ENCODE measurements at regions of chr1 and their contacts with region 1.

Region 1: GRCh38 chr1:178031856-178032320 is 62.0 kb upstream of the RASAL2 start:
- DNase-seq: peak; percentile 73 to 95
- ATAC-seq: peak; percentile 42 to 96 (median 88)
- H3K4me3 ChIP-seq: no peak overlapping the region
- H3K27ac ChIP-seq: peak overlapping the region in 2 of 10 donors; percentile 14 to 16
- H3K4me1 ChIP-seq: peaks cover 2 to 41% (median 33%) of the 10 kb centered on the region in 9 donors
- H3K27me3 ChIP-seq: no peaks in the 10 kb centered on the region
- CTCF ChIP-seq: peak; percentile 81 to 93 (median 89)

Region 2: DNA sequence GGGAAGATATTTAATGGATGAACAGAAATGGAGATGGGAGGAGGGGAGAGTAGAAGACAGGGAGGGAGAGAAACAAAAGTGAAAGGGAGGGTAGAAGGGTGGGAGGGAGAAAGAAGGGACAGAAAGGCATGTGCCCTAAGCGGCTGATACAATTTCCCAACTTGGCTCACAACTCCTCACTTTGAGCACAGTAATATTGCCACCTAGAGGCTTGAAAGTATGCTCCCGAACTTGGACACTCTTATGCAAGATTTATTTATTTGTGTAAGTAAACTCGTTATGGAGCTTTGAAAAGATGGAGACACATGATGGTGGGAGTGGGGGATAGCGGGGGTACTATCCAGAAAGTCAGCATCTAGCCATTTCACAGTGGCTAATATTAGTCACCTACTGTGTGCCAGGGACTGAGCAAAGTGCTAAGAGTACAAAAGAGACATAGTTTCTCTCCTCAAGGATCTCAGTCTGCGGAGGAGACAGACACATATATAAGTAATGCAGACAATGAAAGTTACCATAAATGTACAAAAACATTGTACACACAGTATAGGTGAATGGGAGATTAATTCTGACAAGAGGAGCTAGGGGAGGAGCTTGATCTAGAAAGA is 251.7 kb before region 1 on chr1:
- intact Hi-C with region 1: no loop called
- DNase-seq: no peak
- ATAC-seq: peak in 5 of 8 donors; percentile 44 to 67 (median 65)
- H3K4me3 ChIP-seq: no peak overlapping the region
- H3K27ac ChIP-seq: no peak overlapping the region
- H3K4me1 ChIP-seq: no peaks in the 10 kb centered on the region
- H3K27me3 ChIP-seq: peaks cover 0 to 52% (median 15%) of the 10 kb centered on the region in 7 donors
- CTCF ChIP-seq: peak in 8 of 9 donors; percentile 39 to 64 (median 49)

Region 3: GRCh38 chr1:177873238-177873637 is 158.7 kb before region 1 on chr1:
- intact Hi-C with region 1: no loop called
- DNase-seq: no peak
- ATAC-seq: no peak
- H3K4me3 ChIP-seq: no peak overlapping the region
- H3K27ac ChIP-seq: no peak overlapping the region
- H3K4me1 ChIP-seq: no peaks in the 10 kb centered on the region
- H3K27me3 ChIP-seq: peaks cover 0 to 25% (median 9%) of the 10 kb centered on the region in 7 donors
- CTCF ChIP-seq: no peak

Region 4: DNA sequence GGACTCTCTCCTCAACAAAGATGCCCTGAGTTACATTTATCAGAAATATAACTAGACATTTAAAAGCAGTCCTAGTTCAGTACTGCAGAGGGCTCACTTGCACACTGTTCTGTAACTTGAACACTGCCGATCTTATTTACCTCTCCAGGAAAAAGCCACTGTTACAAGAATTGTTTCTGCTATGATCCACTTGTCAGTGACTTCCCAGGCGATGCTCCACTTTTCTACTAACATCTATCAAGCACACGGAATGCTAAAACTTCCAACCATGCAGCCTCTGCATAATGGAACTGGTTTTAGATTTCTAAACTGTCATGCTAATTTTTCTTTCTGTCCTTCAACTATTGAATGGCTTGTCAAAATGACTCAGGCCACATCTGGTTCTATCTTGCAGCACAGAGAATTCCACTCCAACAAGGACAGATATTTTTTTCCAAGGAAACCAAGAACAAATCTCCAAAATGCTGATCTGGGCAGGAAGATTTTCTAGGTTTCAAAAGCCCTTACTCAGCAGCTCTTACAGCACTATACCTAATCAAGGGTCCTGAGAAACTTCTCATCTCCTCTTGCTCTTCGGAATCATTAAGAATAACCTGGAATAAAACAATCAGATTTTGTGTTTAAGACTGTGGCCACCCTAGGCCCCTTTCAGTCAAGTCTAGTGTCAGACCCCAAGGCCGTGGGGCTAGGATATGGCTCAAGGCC is 71.9 kb before region 1 on chr1:
- intact Hi-C with region 1: loop called in 1 of 10 experiments (anchors 10 kb)
- DNase-seq: no peak
- ATAC-seq: peak in 4 of 8 donors; percentile 37 to 77 (median 54)
- H3K4me3 ChIP-seq: no peak overlapping the region
- H3K27ac ChIP-seq: no peak overlapping the region
- H3K4me1 ChIP-seq: no peaks in the 10 kb centered on the region
- H3K27me3 ChIP-seq: no peaks in the 10 kb centered on the region
- CTCF ChIP-seq: peak in 8 of 9 donors; percentile 29 to 54 (median 36)

Region 5: DNA sequence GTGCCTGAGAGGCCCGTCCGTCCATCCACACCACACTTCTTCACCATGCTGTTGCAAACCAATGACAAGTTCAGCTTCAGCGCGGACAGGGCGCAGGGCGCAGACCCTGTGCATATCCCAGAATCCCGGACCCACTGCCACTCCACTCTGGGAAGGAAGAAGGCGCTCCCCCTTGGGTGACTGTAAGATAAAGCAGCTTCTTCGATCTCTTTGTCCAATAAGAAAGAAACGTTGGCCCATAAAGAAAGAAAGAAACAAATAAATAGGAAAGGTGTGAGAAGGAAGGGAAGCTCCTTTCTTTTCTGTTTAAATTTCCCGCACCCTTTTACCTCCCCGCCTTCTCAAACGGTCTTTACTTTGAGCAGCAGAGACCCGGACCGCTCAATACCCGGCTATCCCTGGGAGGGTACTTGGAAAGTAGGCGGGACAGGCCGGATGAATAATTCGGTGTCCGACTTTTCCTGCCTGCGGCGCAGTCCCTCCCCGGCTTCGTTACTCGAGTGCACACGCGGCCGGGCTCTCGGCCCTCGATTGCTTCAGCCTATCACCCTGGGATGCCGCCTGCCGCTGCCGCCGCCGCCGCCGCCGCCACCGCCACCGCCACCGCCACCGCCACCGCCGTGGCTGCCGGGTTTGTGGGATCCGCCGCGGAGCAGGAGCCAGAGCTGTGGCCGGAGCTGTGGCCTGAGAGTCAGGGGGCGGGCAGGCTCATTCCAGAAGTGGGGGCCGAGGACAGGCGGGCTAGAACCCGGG is 61.5 kb after region 1 on chr1:
- intact Hi-C with region 1: loop called in 7 of 10 experiments (anchors 2 to 10 kb)
- DNase-seq: peak; percentile 91 to 95
- ATAC-seq: peak; percentile 83 to 94 (median 90)
- H3K4me3 ChIP-seq: peak overlapping the region; percentile 45 to 100 (median 96)
- H3K27ac ChIP-seq: peak overlapping the region; percentile 75 to 97 (median 94)
- H3K4me1 ChIP-seq: peaks cover 0 to 53% (median 45%) of the 10 kb centered on the region in 9 donors
- H3K27me3 ChIP-seq: peaks cover 0 to 14% (median 0%) of the 10 kb centered on the region in 7 donors
- CTCF ChIP-seq: peak in 1 of 9 donors; percentile 14

Region 6: DNA sequence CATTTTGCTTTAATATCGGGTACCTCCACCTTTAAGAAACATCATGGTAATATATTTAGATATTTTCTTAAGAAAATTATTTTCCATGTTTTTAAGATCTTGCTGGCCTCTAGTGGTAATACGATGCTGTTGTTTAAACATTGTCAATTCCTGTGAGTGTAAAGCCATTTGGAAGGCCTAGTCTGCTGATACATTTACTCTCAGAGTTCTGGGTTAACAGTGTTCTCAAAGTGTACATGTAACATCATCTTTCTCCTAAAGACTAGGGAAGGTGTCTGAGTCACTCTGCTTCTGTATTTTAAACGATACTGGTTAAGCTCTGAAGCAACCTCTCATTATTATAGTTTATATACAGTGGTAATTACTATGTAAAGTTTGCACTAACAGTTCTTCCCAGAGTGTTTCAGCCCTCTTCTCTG is 251.1 kb after region 1 on chr1:
- intact Hi-C with region 1: loop called in 9 of 10 experiments (anchors 2 to 10 kb)
- DNase-seq: no peak
- ATAC-seq: peak in 6 of 8 donors; percentile 7 to 58 (median 46)
- H3K4me3 ChIP-seq: no peak overlapping the region
- H3K27ac ChIP-seq: no peak overlapping the region
- H3K4me1 ChIP-seq: peaks cover 0 to 58% (median 33%) of the 10 kb centered on the region in 9 donors
- H3K27me3 ChIP-seq: no peaks in the 10 kb centered on the region
- CTCF ChIP-seq: peak in 7 of 9 donors; percentile 38 to 72 (median 54)

Region 7: DNA sequence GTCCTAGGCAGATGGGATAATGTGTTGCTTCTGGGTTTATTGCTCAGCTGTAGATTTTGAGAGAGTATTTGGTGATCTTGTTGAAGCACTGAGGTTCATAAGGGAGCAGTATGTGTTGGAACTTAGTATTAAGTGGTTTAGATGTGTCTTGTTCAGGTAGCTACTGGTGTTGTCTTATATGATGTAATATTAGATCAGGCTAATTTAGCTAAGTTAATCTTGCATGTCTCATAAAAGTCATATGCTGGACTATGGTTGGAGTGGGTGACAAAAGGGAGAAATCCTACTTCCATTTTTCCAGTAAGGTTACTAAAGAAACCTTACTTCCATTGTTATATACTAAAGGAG is 268.4 kb after region 1 on chr1:
- intact Hi-C with region 1: loop called in 3 of 10 experiments (anchors 5 to 10 kb)
- DNase-seq: no peak
- ATAC-seq: peak in 2 of 8 donors; percentile 10 to 14
- H3K4me3 ChIP-seq: no peak overlapping the region
- H3K27ac ChIP-seq: peak overlapping the region in 1 of 10 donors; percentile 8
- H3K4me1 ChIP-seq: peaks cover 0 to 37% (median 17%) of the 10 kb centered on the region in 9 donors
- H3K27me3 ChIP-seq: no peaks in the 10 kb centered on the region
- CTCF ChIP-seq: no peak

Region 8: GRCh38 chr1:178438432-178438831 is 406.5 kb after region 1 on chr1:
- intact Hi-C with region 1: no loop called
- DNase-seq: no peak
- ATAC-seq: no peak
- H3K4me3 ChIP-seq: no peak overlapping the region
- H3K27ac ChIP-seq: no peak overlapping the region
- H3K4me1 ChIP-seq: peaks cover 0 to 18% (median 4%) of the 10 kb centered on the region in 9 donors
- H3K27me3 ChIP-seq: no peaks in the 10 kb centered on the region
- CTCF ChIP-seq: no peak